MCF 10A (cell line): ENCODE measurements at regions of chr2 and their contacts with region 1.

Region 1: GRCh38 chr2:36367895-36368353 is 12.3 kb downstream of the CRIM1 start:
- DNase-seq: peak; percentile 79
- H3K4me3 Mint-ChIP-seq: peak overlapping the region; percentile 50
- H3K27ac Mint-ChIP-seq: peak overlapping the region; percentile 87
- H3K4me1 Mint-ChIP-seq: peaks cover 82% of the 10 kb centered on the region
- H3K27me3 Mint-ChIP-seq: no peaks in the 10 kb centered on the region
- CTCF ChIP-seq: no peak

Region 2: DNA sequence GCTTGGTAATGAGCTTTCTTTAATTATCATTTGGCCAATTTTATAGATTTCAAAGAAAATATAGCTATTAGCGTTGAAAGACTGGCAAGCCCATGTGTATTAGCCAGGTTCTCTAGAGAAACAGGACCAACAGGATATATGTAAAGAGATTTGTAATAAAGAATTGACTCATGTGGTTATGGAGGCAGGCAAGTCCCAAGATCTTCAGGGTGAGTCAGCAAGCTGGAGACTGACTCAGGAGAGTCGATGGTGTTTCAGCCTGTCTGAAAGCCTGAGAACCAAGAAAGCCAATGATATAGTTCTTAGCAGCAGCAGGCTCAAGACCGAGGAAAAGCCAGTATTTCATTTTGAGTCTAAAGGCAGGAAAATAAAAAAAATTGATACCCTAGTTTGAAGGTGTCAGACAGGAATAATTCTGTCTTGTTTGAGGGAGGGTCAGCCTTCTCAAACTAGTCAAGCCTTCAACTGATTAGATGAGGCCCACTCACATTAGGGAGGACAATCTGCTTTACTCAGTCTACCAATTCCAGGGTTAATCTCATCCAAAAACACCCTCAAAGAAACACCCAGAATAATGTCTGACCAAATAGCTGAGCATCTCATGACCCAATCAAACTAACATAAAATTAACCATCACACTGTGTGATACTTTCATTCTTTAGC is 90.6 kb before region 1 on chr2:
- CTCF ChIA-PET with region 1: no interaction called
- POLR2A ChIA-PET with region 1: no interaction called
- intact Hi-C with region 1: no loop called
- DNase-seq: peak; percentile 68
- H3K4me3 Mint-ChIP-seq: no peak overlapping the region
- H3K27ac Mint-ChIP-seq: no peak overlapping the region
- H3K4me1 Mint-ChIP-seq: no peaks in the 10 kb centered on the region
- H3K27me3 Mint-ChIP-seq: peaks cover 11% of the 10 kb centered on the region
- CTCF ChIP-seq: no peak

Region 3: GRCh38 chr2:36403675-36404230 is 35.8 kb after region 1 on chr2:
- CTCF ChIA-PET with region 1: interaction called, 3 read pairs
- POLR2A ChIA-PET with region 1: interaction called, 36 read pairs
- intact Hi-C with region 1: no loop called
- DNase-seq: peak; percentile 75
- H3K4me3 Mint-ChIP-seq: no peak overlapping the region
- H3K27ac Mint-ChIP-seq: no peak overlapping the region
- H3K4me1 Mint-ChIP-seq: peaks cover 12% of the 10 kb centered on the region
- H3K27me3 Mint-ChIP-seq: no peaks in the 10 kb centered on the region
- CTCF ChIP-seq: no peak

Region 4: DNA sequence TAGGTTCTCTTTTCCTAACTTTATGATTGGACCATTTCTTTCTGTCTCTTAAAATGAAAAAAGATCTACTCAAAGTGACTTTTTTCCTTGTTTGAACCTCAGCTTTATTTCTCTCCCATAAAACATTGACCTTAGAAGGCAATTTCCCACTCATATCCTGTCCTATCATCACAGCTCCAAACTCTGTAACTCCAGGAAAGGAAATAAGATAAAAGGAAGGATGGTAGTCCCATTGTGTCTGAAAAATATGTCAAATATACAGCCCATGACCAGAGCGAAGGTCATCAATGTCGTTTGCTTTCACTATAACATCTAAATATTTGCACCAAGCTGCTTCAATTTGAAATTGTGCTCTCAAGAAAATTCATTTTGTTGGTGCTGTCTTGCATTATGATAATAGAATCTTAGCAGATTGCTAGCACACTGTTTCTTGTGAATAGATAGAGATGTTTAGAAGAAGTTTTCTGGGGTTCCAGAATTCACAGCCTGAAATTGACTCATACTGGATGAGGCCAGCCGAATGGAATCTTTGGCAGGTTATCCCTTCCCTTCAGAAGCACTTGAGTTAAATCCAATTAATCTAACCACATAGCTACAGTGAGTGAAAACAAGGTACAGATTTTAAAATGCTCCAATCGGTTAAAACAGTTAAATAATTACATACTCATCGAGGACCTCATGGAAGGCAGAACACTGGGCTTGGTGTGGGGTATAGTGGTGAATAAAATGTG is 82.7 kb after region 1 on chr2:
- CTCF ChIA-PET with region 1: interaction called, 3 read pairs
- POLR2A ChIA-PET with region 1: interaction called, 25 read pairs
- intact Hi-C with region 1: no loop called
- DNase-seq: peak; percentile 59
- H3K4me3 Mint-ChIP-seq: no peak overlapping the region
- H3K27ac Mint-ChIP-seq: peak overlapping the region; percentile 5
- H3K4me1 Mint-ChIP-seq: peaks cover 37% of the 10 kb centered on the region
- H3K27me3 Mint-ChIP-seq: no peaks in the 10 kb centered on the region
- CTCF ChIP-seq: no peak

Region 5: DNA sequence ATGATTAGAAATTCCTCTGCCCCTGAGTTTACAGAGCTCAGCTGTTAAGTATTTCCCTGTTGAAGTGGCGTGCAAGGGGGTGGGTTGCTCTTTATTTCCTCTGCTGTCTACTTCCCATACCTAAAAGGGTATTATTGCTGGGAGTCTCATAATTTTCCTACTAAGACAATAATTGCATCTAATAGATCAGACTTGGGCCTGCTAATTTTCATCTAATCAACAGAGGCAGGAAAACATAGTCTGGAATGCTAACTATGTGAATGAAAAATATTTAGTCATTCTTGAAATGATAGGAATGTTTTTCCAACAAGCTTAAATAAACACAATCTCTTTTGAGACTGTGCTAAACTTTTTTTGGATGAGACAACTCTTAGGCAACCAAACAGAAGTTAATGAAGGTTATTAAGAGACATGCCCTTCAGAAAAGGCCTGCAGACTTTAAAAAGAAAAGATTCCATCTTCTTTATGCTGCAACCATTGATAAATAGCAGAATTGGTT is 118.7 kb after region 1 on chr2:
- CTCF ChIA-PET with region 1: interaction called, 5 read pairs
- POLR2A ChIA-PET with region 1: interaction called, 19 read pairs
- intact Hi-C with region 1: no loop called
- DNase-seq: peak; percentile 50
- H3K4me3 Mint-ChIP-seq: peak overlapping the region; percentile 20
- H3K27ac Mint-ChIP-seq: peak overlapping the region; percentile 61
- H3K4me1 Mint-ChIP-seq: peaks cover 51% of the 10 kb centered on the region
- H3K27me3 Mint-ChIP-seq: no peaks in the 10 kb centered on the region
- CTCF ChIP-seq: no peak